Heart right ventricle (tissue), 16 donors: ENCODE measurements at regions of chr10 and their contacts with region 1.

Region 1: DNA sequence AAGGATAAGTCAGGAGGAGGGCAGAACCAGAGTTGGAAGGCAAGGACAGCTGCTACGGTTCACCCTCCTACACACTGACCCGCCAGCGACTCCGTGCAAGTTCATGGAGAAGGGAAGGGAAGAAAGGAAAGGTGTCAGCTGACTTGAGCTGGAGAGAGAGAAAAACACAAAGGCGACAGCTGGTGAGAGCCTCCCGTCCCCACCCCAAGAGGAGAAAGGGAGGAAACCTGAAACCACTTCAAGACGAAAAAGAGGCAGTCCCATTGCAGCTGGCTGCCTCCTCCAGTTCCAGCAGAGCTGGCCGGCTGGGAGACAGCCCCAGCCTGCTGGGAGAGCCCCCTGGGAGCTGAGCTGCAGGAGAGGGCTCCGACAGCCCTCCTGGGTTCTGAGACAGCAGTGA is 75.2 kb downstream of the PARD3 start:
- DNase-seq: peak; percentile 50 to 51
- ATAC-seq: peak; percentile 46 to 73 (median 65)
- H3K4me3 ChIP-seq: peak overlapping the region in 6 of 10 donors; percentile 2 to 30 (median 14)
- H3K27ac ChIP-seq: peak overlapping the region in 3 of 10 donors; percentile 3 to 47 (median 26)
- H3K4me1 ChIP-seq: peaks cover 8 to 37% (median 27%) of the 10 kb centered on the region in 9 donors
- H3K27me3 ChIP-seq: no peaks in the 10 kb centered on the region
- CTCF ChIP-seq: no peak

Region 2: GRCh38 chr10:34776090-34776690 is 36.3 kb after region 1 on chr10:
- intact Hi-C with region 1: loop called in 1 of 10 experiments (anchors 2 kb)
- DNase-seq: no peak
- ATAC-seq: no peak
- H3K4me3 ChIP-seq: no peak overlapping the region
- H3K27ac ChIP-seq: no peak overlapping the region
- H3K4me1 ChIP-seq: peaks cover 12 to 53% (median 31%) of the 10 kb centered on the region in 9 donors
- H3K27me3 ChIP-seq: no peaks in the 10 kb centered on the region
- CTCF ChIP-seq: no peak